ENCODE measurements at regions of chr3 and their contacts with region 1.

Region 1: GRCh38 chr3:87287011-87287410 is 10.6 kb upstream of the POU1F1 start:
- DNase-seq: no peak
- ATAC-seq: no peak
- H3K4me3 ChIP-seq: no peak overlapping the region
- H3K4me3 Mint-ChIP-seq: no peak overlapping the region
- H3K27ac ChIP-seq: no peak overlapping the region
- H3K27ac Mint-ChIP-seq: no peak overlapping the region
- H3K4me1 ChIP-seq: no peaks in the 10 kb centered on the region
- H3K4me1 Mint-ChIP-seq: no peaks in the 10 kb centered on the region
- H3K27me3 ChIP-seq: no peaks in the 10 kb centered on the region
- H3K27me3 Mint-ChIP-seq: peaks cover 13% of the 10 kb centered on the region
- CTCF ChIP-seq: no peak

Region 2: DNA sequence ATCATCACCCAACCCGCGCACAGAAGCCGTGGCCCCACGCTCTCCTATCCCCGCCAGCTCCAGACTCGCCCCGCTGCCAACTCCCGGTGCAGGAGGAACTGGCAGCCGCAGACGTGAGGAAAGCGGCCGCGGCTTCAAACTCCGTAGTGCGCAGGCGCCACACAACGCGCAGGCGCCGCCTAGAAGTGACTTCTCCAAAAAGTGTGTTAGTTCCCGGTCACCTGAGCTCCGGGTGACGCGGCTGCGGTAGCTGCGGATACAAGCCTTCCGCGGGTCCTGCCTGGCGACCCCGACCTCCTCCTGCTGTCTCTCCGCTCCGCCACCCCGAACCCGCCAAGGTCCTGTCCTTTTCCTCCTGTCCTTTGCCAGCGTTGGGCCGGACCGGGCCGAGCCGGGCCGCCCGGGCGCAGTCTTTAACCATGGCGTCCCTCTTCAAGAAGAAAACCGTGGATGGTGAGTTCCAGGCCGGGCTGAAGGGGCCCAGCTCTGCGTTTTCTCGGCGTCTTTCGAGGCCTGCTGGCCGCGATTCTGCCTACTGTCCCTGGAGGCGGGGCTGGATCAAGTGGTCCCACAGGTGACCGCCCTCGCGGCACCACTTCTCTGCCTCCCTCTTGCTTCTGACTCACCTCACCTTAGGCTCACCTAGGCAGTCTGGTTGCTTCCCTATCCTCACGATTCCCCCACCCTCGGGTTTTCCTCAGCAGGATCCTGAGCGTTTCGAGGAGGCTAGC is 59.7 kb before region 1 on chr3 and contains the start of gene CHMP2B:
- CTCF ChIA-PET with region 1: no interaction called
- POLR2A ChIA-PET with region 1: no interaction called
- intact Hi-C with region 1: no loop called
- DNase-seq: peak; percentile 96
- ATAC-seq: peak; percentile 87
- H3K4me3 ChIP-seq: peak within 1 kb of the TSS; percentile 42 to 99 (median 96)
- H3K4me3 Mint-ChIP-seq: peak within 1 kb of the TSS; percentile 97
- H3K27ac ChIP-seq: peak within 1 kb of the TSS; percentile 89 to 98
- H3K27ac Mint-ChIP-seq: peak within 1 kb of the TSS; percentile 97
- H3K4me1 ChIP-seq: peaks cover 13 to 16% of the 10 kb centered on the region in 2 donors
- H3K4me1 Mint-ChIP-seq: peaks cover 53% of the 10 kb centered on the region
- H3K27me3 ChIP-seq: peaks cover 0 to 7% (median 3%) of the 10 kb centered on the region in 4 experiments
- H3K27me3 Mint-ChIP-seq: peaks cover 14% of the 10 kb centered on the region
- CTCF ChIP-seq: no peak
- total RNA-seq, gene CHMP2B: 22.2 and 25.0 TPM in 2 replicates

Region 3: GRCh38 chr3:87298111-87298718 is 11.2 kb after region 1 on chr3:
- CTCF ChIA-PET with region 1: interaction called, 26 read pairs
- POLR2A ChIA-PET with region 1: no interaction called
- intact Hi-C with region 1: no loop called
- DNase-seq: peak; percentile 38
- ATAC-seq: peak; percentile 62
- H3K4me3 ChIP-seq: no peak overlapping the region
- H3K4me3 Mint-ChIP-seq: no peak overlapping the region
- H3K27ac ChIP-seq: no peak overlapping the region
- H3K27ac Mint-ChIP-seq: no peak overlapping the region
- H3K4me1 ChIP-seq: no peaks in the 10 kb centered on the region
- H3K4me1 Mint-ChIP-seq: no peaks in the 10 kb centered on the region
- H3K27me3 ChIP-seq: no peaks in the 10 kb centered on the region
- H3K27me3 Mint-ChIP-seq: peaks cover 4% of the 10 kb centered on the region
- CTCF ChIP-seq: peak; percentile 90